ENCODE measurements at regions of chr1 and their contacts with region 1.

Region 1: GRCh38 chr1:32413507-32414185 is 19.4 kb upstream of the BSDC1 start:
- DNase-seq: peak; percentile 85
- H3K4me3 ChIP-seq: no peak overlapping the region
- H3K27ac ChIP-seq: no peak overlapping the region
- H3K4me1 ChIP-seq: no peaks in the 10 kb centered on the region
- H3K27me3 ChIP-seq: no peaks in the 10 kb centered on the region
- CTCF ChIP-seq: peak; percentile 81

Region 2: DNA sequence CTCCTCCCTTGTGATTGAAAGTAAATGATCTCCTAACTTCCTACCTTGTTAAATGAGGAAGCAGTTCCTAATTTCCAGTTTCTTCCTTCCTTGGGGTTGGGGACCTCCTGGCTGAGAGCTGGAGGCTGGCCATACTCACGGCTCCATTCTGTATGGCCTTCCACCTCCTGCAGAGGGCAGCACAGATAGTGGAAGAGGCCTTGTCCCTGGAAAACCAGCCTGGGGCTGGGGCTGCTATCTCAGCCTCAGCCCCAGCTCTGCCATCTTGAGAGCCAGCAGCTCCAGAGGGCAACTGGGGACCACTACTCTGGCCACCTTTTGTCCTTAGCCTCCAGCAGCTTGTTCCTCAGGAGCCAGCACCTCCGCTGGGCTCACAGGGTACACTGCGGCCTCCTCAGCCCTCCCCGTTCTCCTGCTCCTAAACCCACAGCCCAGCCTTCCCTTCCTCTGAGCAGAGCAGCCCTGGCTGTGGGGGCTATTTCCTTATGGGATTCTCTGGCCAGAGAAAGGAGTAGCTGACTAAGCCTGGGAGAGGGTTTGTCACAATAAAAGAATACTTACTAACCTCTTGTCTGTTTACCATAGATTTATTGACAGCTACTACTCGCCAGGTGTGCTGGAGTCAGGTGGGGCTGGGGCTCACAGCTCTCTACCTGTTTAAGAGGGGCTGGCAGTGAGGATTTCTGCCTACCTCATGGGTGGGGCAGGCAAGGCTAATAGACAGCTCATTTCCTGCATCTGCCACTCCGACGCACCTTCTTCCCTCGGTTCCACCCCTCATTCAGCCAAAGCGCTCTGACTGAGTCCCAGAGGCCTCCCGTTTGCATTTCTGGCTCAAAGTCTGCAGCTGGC is 197.8 kb before region 1 on chr1:
- CTCF ChIA-PET with region 1: interaction called, 4 read pairs
- POLR2A ChIA-PET with region 1: no interaction called
- intact Hi-C with region 1: loop called (anchors 5 kb)
- DNase-seq: peak; percentile 76
- H3K4me3 ChIP-seq: no peak overlapping the region
- H3K27ac ChIP-seq: no peak overlapping the region
- H3K4me1 ChIP-seq: peaks cover 5% of the 10 kb centered on the region
- H3K27me3 ChIP-seq: no peaks in the 10 kb centered on the region
- CTCF ChIP-seq: peak; percentile 85

Region 3: GRCh38 chr1:32438136-32438535 is 24.5 kb after region 1 on chr1:
- CTCF ChIA-PET with region 1: no interaction called
- POLR2A ChIA-PET with region 1: no interaction called
- intact Hi-C with region 1: no loop called
- DNase-seq: no peak
- H3K4me3 ChIP-seq: no peak overlapping the region
- H3K27ac ChIP-seq: no peak overlapping the region
- H3K4me1 ChIP-seq: no peaks in the 10 kb centered on the region
- H3K27me3 ChIP-seq: no peaks in the 10 kb centered on the region
- CTCF ChIP-seq: no peak

Region 4: GRCh38 chr1:32580348-32581017 is 166.8 kb after region 1 on chr1:
- CTCF ChIA-PET with region 1: interaction called, 13 read pairs
- POLR2A ChIA-PET with region 1: no interaction called
- intact Hi-C with region 1: no loop called
- DNase-seq: no peak
- H3K4me3 ChIP-seq: no peak overlapping the region
- H3K27ac ChIP-seq: no peak overlapping the region
- H3K4me1 ChIP-seq: no peaks in the 10 kb centered on the region
- H3K27me3 ChIP-seq: no peaks in the 10 kb centered on the region
- CTCF ChIP-seq: no peak

Region 5: DNA sequence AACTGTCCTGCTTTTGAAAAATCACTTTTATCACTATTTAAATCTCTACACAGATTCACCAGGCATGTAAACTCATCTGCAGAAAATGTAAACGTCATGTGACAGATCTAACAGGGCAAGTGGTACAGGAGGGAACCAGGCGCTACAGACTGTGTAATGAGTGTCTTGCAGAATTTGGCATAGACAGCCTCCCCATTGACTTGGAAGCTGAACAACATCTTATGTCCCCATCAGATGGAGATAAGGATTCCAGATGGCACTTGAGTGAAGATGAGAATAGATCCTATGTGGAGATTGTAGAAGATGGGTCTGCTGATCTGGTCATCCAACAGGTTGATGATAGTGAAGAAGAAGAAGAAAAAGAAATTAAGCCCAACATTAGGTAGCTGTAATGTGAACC is 186.4 kb after region 1 on chr1:
- CTCF ChIA-PET with region 1: no interaction called
- POLR2A ChIA-PET with region 1: no interaction called
- intact Hi-C with region 1: no loop called
- DNase-seq: no peak
- H3K4me3 ChIP-seq: no peak overlapping the region
- H3K27ac ChIP-seq: no peak overlapping the region
- H3K4me1 ChIP-seq: no peaks in the 10 kb centered on the region
- H3K27me3 ChIP-seq: no peaks in the 10 kb centered on the region
- CTCF ChIP-seq: no peak